ENCODE measurements at regions of chr14 and their contacts with region 1.

Region 1: DNA sequence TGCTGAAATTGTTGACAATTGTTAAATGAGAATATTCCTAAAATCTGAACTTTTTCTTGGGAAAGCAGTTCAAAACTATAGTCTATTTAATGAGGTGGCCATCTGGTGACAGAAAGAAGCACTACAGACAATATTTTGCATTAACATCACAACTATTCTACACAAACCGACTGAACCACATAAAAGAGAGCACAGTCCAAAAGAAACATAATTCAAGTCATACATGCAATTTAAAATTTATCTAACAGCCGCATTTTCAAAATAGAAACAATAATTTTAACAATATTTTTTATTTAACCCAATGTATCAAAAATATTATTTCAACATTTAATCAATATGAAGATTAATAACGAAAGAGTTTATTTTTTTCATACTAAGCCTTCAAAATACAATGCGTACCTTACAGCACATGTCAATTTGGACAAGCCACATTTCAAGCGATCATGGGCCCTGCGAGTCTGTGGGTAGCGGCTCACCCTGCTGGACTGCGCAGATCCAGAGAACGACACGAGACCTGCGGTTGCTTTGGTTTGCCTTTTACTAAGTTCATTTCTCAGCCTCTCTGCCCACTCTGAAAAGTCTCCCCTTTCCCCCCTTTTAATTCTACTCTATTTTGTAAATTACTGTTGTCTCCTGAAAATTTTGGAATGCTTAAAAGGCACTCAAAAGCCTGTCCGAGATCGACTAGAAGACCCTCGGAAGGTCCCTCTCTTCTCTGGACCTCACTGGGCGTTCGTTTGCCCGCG is 947 bp upstream of the LRRC9 start:
- DNase-seq: peak; percentile 38
- H3K4me3 ChIP-seq: no peak overlapping the region
- H3K27ac ChIP-seq: no peak overlapping the region
- H3K4me1 ChIP-seq: no peaks in the 10 kb centered on the region
- H3K27me3 ChIP-seq: peaks cover 19 to 41% of the 10 kb centered on the region in 2 experiments
- CTCF ChIP-seq: peak; percentile 4 to 21
- POLR2A ChIP-seq: no peak

Region 2: DNA sequence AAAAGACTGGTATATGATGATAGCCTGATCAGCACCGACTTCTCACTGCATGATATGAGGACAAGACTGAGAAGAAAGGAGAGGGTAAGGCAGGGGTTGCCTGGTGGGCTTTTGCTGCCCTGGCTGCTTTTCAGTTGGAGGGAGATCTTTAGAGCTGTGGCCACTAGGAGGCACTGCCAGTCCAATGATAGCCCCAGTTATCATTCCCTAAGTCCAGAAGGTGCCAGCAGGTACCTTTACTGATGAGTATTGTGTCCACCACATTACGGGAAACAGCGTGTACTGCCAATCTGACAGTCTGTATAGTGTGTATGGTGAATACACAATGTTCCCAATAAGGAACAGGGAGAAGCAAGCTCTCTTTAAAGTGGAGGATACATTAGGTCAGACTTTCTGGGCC is 286.6 kb before region 1 on chr14:
- CTCF ChIA-PET with region 1: interaction called, 77 read pairs
- POLR2A ChIA-PET with region 1: no interaction called
- dilution Hi-C with region 1: no loop called
- intact Hi-C with region 1: loop called (anchors 1 kb)
- DNase-seq: peak; percentile 24
- H3K4me3 ChIP-seq: no peak overlapping the region
- H3K27ac ChIP-seq: no peak overlapping the region
- H3K4me1 ChIP-seq: no peaks in the 10 kb centered on the region
- H3K27me3 ChIP-seq: peaks cover 16 to 47% of the 10 kb centered on the region in 2 experiments
- CTCF ChIP-seq: peak; percentile 49 to 52
- POLR2A ChIP-seq: no peak

Region 3: DNA sequence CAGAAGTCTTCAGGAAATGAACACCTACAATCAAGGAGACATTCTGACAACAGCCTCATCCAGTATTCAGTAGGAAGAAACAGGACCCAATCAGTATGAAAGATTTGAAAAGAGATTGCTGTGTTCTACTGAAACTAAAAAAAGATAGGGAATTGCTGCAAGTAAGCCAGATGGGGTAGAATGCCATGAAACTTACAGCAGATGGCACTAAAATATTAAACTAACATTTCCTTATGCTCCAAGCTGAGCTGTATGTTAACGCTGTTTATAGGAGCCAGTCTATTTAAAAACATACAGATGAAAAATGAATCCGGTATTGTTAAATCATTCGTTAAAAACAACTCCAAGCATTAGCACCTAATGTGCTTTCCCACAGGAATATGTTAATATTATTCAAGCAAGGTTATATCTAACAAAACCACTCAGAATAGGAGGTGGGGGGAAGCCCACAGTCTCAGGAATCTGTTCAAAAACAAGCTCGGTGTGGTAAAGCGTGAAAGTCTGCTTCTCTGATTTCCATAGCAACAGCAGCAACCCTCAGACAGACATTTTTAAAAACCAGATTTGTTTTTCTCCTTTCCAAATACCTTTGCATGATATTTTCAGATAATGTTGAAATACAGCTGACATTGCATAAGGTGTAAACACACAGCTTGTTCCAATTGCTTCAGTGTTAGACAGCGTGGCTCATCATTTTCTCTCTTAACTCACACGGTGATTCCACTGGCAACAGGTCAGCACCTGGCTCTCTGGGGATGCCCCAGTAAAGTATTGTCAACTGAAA is 211.0 kb before region 1 on chr14:
- CTCF ChIA-PET with region 1: interaction called, 33 read pairs
- POLR2A ChIA-PET with region 1: no interaction called
- dilution Hi-C with region 1: no loop called
- intact Hi-C with region 1: no loop called
- DNase-seq: no peak
- H3K4me3 ChIP-seq: no peak overlapping the region
- H3K27ac ChIP-seq: no peak overlapping the region
- H3K4me1 ChIP-seq: no peaks in the 10 kb centered on the region
- H3K27me3 ChIP-seq: peaks cover 2 to 22% of the 10 kb centered on the region in 2 experiments
- CTCF ChIP-seq: no peak
- POLR2A ChIP-seq: no peak

Region 4: GRCh38 chr14:59836116-59836515 is 82.9 kb before region 1 on chr14:
- CTCF ChIA-PET with region 1: no interaction called
- POLR2A ChIA-PET with region 1: no interaction called
- dilution Hi-C with region 1: no loop called
- intact Hi-C with region 1: no loop called
- DNase-seq: no peak
- H3K4me3 ChIP-seq: no peak overlapping the region
- H3K27ac ChIP-seq: no peak overlapping the region
- H3K4me1 ChIP-seq: no peaks in the 10 kb centered on the region
- H3K27me3 ChIP-seq: peaks cover 0 to 10% of the 10 kb centered on the region in 2 experiments
- CTCF ChIP-seq: no peak
- POLR2A ChIP-seq: no peak

Region 5: GRCh38 chr14:59870277-59871165 is 48.5 kb before region 1 on chr14 and contains the start of gene RTN1:
- CTCF ChIA-PET with region 1: interaction called, 3 read pairs
- POLR2A ChIA-PET with region 1: no interaction called
- dilution Hi-C with region 1: no loop called
- intact Hi-C with region 1: loop called (anchors 5 kb)
- DNase-seq: peak; percentile 44
- H3K4me3 ChIP-seq: peak within 1 kb of the TSS; percentile 11 to 40 (median 34)
- H3K27ac ChIP-seq: no peak within 1 kb of the TSS
- H3K4me1 ChIP-seq: no peaks in the 10 kb centered on the region
- H3K27me3 ChIP-seq: peaks cover 27 to 72% of the 10 kb centered on the region in 2 experiments
- CTCF ChIP-seq: no peak
- POLR2A ChIP-seq: no peak
- total RNA-seq, gene RTN1: 0.29 TPM in 1 of 2 replicates, not detected in the other

Region 6: DNA sequence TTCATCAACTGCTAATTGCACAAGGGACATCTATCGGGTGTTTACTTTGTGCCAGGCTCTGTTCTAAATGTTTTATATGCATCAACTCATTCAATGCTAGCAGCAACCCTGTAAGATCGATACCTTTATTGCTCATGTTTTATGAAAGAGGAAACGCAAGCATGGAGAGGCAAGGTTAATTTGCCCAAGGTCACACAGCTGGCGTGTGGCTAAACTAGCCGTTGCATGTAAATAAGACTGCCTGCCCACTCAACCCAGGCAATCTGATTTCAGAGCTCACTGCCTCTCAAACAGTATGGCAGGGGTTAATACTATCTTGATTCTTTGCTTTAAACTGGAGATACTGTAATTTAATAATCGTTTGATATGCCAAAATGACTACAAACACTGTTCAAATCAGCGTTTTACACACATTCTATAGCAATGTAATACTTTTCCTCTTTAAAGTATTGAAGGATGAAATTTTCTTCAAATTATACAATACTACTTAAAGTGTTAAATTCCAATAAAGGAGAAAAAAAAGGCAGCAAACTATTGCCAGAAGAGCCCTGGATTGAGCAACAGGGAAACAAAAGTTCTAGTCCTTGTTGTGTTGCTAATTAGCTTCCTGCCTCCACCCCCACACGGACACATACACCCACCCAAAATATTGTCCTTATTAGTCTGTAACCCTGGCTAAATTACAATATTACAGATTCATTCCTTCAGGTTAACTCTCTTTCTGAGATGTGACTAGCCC is 285.3 kb after region 1 on chr14:
- CTCF ChIA-PET with region 1: no interaction called
- POLR2A ChIA-PET with region 1: no interaction called
- dilution Hi-C with region 1: no loop called
- intact Hi-C with region 1: no loop called
- DNase-seq: no peak
- H3K4me3 ChIP-seq: no peak overlapping the region
- H3K27ac ChIP-seq: no peak overlapping the region
- H3K4me1 ChIP-seq: no peaks in the 10 kb centered on the region
- H3K27me3 ChIP-seq: peaks cover 3 to 6% of the 10 kb centered on the region in 2 experiments
- CTCF ChIP-seq: no peak
- POLR2A ChIP-seq: no peak

Region 7: DNA sequence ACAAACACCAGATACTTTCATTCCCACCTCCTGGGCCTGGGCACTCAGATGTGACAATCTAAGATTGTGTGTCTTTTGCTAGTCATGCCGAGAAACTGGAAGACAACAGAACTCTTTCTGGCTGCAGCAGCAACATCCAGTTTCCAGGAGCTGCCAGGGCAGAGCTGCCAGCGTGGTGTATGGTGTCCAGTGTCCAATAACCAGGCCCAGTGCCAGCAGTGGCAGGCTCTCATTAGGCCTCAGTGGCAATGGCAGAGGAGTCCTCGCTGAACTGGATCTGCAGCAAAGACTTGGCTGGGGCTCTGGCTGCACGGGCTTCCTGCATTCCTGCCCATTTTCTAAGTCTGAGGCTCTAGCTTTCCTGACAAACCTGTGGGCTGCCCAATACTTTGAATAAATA is 303.8 kb after region 1 on chr14:
- CTCF ChIA-PET with region 1: no interaction called
- POLR2A ChIA-PET with region 1: no interaction called
- dilution Hi-C with region 1: no loop called
- intact Hi-C with region 1: no loop called
- DNase-seq: no peak
- H3K4me3 ChIP-seq: no peak overlapping the region
- H3K27ac ChIP-seq: no peak overlapping the region
- H3K4me1 ChIP-seq: no peaks in the 10 kb centered on the region
- H3K27me3 ChIP-seq: peaks cover 3 to 4% of the 10 kb centered on the region in 2 experiments
- CTCF ChIP-seq: no peak
- POLR2A ChIP-seq: no peak